Body of pancreas (tissue), 4 donors: ENCODE measurements at regions of chr13 and their contacts with region 1.

Region 1: DNA sequence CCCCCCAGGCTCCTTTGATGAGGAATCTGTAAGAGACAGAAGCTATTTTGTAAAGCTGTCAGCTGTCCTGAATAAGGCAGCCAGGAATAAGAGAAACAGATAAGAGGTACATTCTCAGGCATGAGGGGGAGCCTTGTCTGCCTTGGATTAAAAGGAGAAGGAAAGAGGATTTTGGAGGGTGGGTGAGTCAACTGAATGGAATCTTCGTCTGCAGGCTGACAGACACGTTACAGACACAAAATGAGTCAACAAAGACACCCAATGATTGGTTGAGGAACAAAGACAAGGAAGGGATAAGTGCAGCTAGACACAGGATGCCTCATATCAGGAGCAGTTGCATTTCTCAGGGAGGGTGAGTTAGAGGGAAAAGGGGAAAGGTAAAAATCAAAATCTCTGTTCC is 162.5 kb downstream of the OLFM4 start:
- DNase-seq: no peak
- ATAC-seq: no peak
- H3K4me3 ChIP-seq: no peak overlapping the region
- H3K27ac ChIP-seq: no peak overlapping the region
- H3K4me1 ChIP-seq: no peaks in the 10 kb centered on the region
- H3K27me3 ChIP-seq: no peaks in the 10 kb centered on the region
- CTCF ChIP-seq: no peak
- POLR2A ChIP-seq: no peak

Region 2: GRCh38 chr13:52846567-52847321 is 344.3 kb before region 1 on chr13:
- intact Hi-C with region 1: loop called (anchors 10 kb)
- DNase-seq: peak; percentile 52 to 72 (median 64)
- ATAC-seq: peak; percentile 38
- H3K4me3 ChIP-seq: no peak overlapping the region
- H3K27ac ChIP-seq: no peak overlapping the region
- H3K4me1 ChIP-seq: peaks cover 37% of the 10 kb centered on the region
- H3K27me3 ChIP-seq: peaks cover 0 to 29% of the 10 kb centered on the region in 2 donors
- CTCF ChIP-seq: peak; percentile 11 to 58 (median 45)
- POLR2A ChIP-seq: no peak